PC-9 (cell line): ENCODE measurements at regions of chr22 and their contacts with region 1.

Region 1: GRCh38 chr22:37538590-37539357 is 19.6 kb upstream of the CARD10 start:
- DNase-seq: peak; percentile 92 to 95
- H3K4me3 ChIP-seq: no peak overlapping the region
- H3K27ac ChIP-seq: peak overlapping the region; percentile 46
- H3K4me1 ChIP-seq: peaks cover 60% of the 10 kb centered on the region
- H3K27me3 ChIP-seq: no peaks in the 10 kb centered on the region
- CTCF ChIP-seq: peak; percentile 99

Region 2: DNA sequence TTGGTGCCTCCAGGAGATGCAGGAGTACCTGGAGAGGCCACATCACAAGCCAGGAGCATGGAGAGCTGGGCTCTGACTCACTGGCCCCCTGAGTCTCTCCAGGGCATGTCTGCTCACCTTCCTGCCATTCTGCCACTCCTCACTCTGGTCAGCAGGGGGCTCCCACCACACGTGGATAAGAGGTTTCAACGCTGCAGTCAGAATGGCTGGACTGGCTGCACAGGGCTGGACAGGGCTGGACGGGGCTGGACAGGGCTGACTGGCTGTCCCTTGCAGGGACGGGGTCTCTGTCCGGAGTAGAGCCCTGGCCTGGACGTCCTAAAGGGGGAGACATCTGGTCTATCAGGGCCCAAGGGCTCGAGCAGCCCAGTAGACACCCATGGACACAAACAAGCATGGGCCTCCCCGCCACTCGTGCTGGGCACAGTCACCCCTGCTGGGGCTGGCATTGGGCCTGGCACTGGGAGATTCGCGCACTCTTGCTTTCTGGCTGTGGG is 221.9 kb before region 1 on chr22:
- CTCF ChIA-PET with region 1: no interaction called
- POLR2A ChIA-PET with region 1: no interaction called
- intact Hi-C with region 1: loop called (anchors 1 kb)
- DNase-seq: peak; percentile 90
- H3K4me3 ChIP-seq: no peak overlapping the region
- H3K27ac ChIP-seq: no peak overlapping the region
- H3K4me1 ChIP-seq: peaks cover 51% of the 10 kb centered on the region
- H3K27me3 ChIP-seq: no peaks in the 10 kb centered on the region
- CTCF ChIP-seq: peak; percentile 99

Region 3: DNA sequence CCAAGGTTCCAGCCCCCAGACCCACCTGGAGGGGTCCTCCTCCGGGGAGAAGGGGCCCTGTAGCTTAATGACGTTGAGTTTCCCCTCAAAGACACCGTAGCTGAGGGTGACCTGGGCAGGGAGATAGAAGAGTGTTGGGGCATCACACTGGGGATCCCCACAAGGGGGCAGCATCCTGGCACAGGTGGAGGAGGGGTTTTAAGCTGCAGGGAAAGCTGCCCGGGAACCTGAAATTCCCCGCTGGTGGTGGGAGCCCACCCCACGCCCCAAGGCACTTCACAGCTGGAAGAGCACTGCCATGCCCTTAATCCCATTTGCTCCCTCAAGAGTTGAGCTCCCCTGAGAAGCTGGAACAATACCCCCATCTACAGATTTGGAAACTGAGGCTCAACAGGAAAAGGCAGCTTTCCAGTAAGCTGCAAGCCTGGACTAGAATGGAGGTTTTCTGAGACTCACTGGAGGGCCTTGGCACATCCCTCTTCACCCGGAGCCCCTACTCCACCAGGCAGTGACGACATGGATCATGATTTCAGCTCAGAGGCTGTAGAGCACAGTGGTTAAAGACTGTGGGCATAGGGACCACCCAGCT is 66.3 kb before region 1 on chr22:
- CTCF ChIA-PET with region 1: interaction called, 5 read pairs
- POLR2A ChIA-PET with region 1: no interaction called
- intact Hi-C with region 1: loop called (anchors 1 kb)
- DNase-seq: peak in 1 of 2 experiments; percentile 56
- H3K4me3 ChIP-seq: no peak overlapping the region
- H3K27ac ChIP-seq: no peak overlapping the region
- H3K4me1 ChIP-seq: no peaks in the 10 kb centered on the region
- H3K27me3 ChIP-seq: no peaks in the 10 kb centered on the region
- CTCF ChIP-seq: peak; percentile 88

Region 4: GRCh38 chr22:37566903-37567820 is 28.4 kb after region 1 on chr22:
- CTCF ChIA-PET with region 1: interaction called, 52 read pairs
- POLR2A ChIA-PET with region 1: interaction called, 4 read pairs
- intact Hi-C with region 1: loop called (anchors 1 kb)
- DNase-seq: peak; percentile 93 to 98
- H3K4me3 ChIP-seq: no peak overlapping the region
- H3K27ac ChIP-seq: peak overlapping the region; percentile 81
- H3K4me1 ChIP-seq: peaks cover 91% of the 10 kb centered on the region
- H3K27me3 ChIP-seq: no peaks in the 10 kb centered on the region
- CTCF ChIP-seq: peak; percentile 99

Region 5: GRCh38 chr22:37588546-37589215 is 49.9 kb after region 1 on chr22:
- CTCF ChIA-PET with region 1: interaction called, 21 read pairs
- POLR2A ChIA-PET with region 1: no interaction called
- intact Hi-C with region 1: no loop called
- DNase-seq: peak in 1 of 2 experiments; percentile 66
- H3K4me3 ChIP-seq: no peak overlapping the region
- H3K27ac ChIP-seq: no peak overlapping the region
- H3K4me1 ChIP-seq: peaks cover 5% of the 10 kb centered on the region; the same call in 1 of the 2 replicates
- H3K27me3 ChIP-seq: no peaks in the 10 kb centered on the region
- CTCF ChIP-seq: no peak

Region 6: DNA sequence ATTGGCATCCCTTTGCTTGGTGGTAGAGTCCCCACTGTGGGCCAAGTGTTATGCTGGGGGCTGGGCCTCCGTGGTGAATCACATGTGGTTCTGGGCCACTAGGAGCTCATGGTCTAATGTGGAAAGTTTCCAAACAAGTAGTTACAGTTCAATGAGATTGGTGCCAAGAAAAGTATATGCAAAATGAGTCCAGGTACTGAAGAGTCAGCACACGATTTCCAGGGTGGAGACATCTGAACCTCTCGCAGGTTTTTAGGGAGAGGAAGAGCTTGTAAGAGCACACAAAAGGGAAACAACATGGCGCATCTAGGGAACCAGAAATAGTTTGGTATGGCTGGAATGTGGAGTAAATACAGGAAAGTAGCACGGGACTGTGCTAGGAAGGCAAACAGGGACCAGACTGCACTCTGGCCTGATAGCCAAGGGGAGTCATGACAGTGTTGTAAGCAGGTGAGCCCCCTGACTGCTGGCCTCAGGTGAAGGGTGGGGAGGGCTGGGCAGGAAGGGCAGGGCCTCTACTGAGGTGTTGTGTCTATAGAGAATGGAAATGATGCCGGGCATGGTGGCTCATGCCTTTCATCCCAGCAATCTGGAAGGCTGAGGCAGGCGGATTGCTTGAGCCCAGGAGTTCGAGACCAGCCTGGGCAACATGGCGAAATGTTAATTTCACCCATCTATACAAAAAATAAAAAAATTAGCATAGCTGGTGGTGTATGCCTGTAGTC is 427.3 kb after region 1 on chr22:
- CTCF ChIA-PET with region 1: no interaction called
- POLR2A ChIA-PET with region 1: no interaction called
- intact Hi-C with region 1: loop called (anchors 10 kb)
- DNase-seq: no peak
- H3K4me3 ChIP-seq: no peak overlapping the region
- H3K27ac ChIP-seq: no peak overlapping the region
- H3K4me1 ChIP-seq: no peaks in the 10 kb centered on the region
- H3K27me3 ChIP-seq: no peaks in the 10 kb centered on the region
- CTCF ChIP-seq: no peak